Endothelial cell of umbilical vein (primary cell): ENCODE measurements at regions of chr7 and their contacts with region 1.

Region 1: DNA sequence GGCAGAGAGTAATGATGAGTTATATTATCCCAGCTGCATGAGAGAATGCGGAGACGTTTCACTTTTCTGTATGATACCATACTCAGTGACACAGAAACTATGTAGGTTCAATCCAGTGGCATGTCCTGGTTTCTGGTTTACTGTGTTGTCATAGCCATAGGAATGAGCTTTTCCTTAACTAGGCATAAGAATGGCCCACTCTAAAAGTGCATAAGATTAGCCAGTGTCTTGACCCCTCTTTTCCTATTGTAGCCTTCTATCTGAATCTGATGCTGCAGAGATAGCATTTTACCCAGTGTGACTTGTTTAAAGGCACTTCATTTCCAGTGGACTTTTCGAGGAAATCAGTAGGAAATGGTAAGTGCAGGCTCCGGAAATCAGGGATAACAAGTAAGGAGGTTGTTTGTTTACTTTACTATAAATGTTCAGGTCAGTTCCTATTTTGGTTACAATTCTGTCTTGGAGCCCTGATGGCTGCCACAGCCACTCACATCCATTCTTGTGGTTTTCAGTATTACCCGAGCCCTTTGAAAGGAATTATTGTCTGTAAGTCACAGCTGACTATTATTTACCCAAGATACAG is 70.5 kb downstream of the SEMA3A start:
- DNase-seq: peak; percentile 85
- H3K4me3 ChIP-seq: peak overlapping the region in 1 of 3 experiments; percentile 38
- H3K27ac ChIP-seq: peak overlapping the region; percentile 57
- H3K4me1 ChIP-seq: peaks cover 11% of the 10 kb centered on the region
- H3K27me3 ChIP-seq: no peaks in the 10 kb centered on the region
- CTCF ChIP-seq: no peak
- POLR2A ChIP-seq: no peak

Region 2: GRCh38 chr7:84025332-84025927 is 98.6 kb before region 1 on chr7:
- CTCF ChIA-PET with region 1: no interaction called
- POLR2A ChIA-PET with region 1: no interaction called
- dilution Hi-C with region 1: no loop called
- intact Hi-C with region 1: loop called (anchors 1 kb)
- DNase-seq: peak; percentile 95
- H3K4me3 ChIP-seq: no peak overlapping the region
- H3K27ac ChIP-seq: peak overlapping the region; percentile 65
- H3K4me1 ChIP-seq: peaks cover 15% of the 10 kb centered on the region
- H3K27me3 ChIP-seq: no peaks in the 10 kb centered on the region
- CTCF ChIP-seq: no peak
- POLR2A ChIP-seq: no peak

Region 3: DNA sequence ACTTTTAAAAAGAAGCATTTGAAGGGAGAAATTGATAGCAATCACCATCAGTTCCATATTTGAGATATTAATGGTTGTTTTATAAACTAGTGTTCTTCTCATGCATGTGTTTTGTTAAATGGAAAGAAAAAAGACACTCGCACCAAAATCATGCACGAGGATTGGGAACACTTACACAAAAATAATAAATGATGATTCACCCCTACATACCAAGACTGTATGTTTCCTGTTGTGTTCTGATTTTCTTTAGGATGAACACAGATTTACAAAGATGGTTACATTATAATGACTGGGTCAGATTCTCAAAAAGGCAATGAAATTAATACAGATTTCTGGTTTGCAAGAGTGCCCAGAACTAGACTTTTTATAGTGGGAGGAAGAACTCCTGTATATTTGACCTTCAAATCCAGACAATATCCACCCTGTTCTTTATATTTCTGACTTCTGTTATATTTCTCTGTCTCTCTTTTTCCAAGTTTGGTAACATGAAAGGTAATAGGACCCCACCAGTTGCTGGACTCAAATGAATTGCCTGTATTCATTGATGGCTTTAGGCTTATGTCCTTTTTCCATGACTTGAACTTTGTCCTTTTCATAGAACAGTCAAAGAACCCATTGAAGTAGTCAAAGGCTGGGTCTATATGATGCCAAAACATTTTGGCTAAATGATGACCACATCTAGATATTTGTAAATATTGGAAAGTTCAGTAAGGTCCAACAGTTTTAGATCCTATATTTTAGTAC is 16.1 kb after region 1 on chr7:
- CTCF ChIA-PET with region 1: interaction called, 3 read pairs
- POLR2A ChIA-PET with region 1: no interaction called
- dilution Hi-C with region 1: no loop called
- intact Hi-C with region 1: loop called (anchors 2 kb)
- DNase-seq: peak; percentile 55
- H3K4me3 ChIP-seq: no peak overlapping the region
- H3K27ac ChIP-seq: peak overlapping the region; percentile 20
- H3K4me1 ChIP-seq: peaks cover 14% of the 10 kb centered on the region
- H3K27me3 ChIP-seq: no peaks in the 10 kb centered on the region
- CTCF ChIP-seq: no peak
- POLR2A ChIP-seq: no peak

Region 4: GRCh38 chr7:84161398-84161797 is 37.3 kb after region 1 on chr7:
- CTCF ChIA-PET with region 1: no interaction called
- POLR2A ChIA-PET with region 1: no interaction called
- dilution Hi-C with region 1: no loop called
- intact Hi-C with region 1: no loop called
- DNase-seq: no peak
- H3K4me3 ChIP-seq: no peak overlapping the region
- H3K27ac ChIP-seq: no peak overlapping the region
- H3K4me1 ChIP-seq: no peaks in the 10 kb centered on the region
- H3K27me3 ChIP-seq: no peaks in the 10 kb centered on the region
- CTCF ChIP-seq: no peak
- POLR2A ChIP-seq: no peak

Region 5: DNA sequence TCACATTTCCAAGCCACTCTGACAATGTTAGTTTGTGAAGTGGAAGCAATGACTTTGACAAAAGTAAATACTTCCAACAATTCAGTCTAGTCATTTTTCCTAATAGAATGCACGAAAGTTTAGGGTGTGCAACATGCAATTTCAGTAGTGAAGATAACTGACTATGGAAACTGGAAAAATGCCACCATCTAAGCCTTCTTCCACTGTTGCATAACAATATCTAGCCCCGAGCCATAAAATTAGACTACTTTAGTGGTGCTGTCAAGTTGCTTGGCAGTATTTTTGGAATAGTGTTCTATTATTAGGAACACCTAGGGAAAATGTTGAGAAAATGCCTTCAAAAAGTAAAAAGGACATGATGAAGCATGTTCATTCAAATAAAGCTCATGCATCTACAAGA is 52.7 kb after region 1 on chr7:
- CTCF ChIA-PET with region 1: no interaction called
- POLR2A ChIA-PET with region 1: no interaction called
- dilution Hi-C with region 1: no loop called
- intact Hi-C with region 1: no loop called
- DNase-seq: no peak
- H3K4me3 ChIP-seq: no peak overlapping the region
- H3K27ac ChIP-seq: no peak overlapping the region
- H3K4me1 ChIP-seq: no peaks in the 10 kb centered on the region
- H3K27me3 ChIP-seq: no peaks in the 10 kb centered on the region
- CTCF ChIP-seq: no peak
- POLR2A ChIP-seq: no peak

Region 6: DNA sequence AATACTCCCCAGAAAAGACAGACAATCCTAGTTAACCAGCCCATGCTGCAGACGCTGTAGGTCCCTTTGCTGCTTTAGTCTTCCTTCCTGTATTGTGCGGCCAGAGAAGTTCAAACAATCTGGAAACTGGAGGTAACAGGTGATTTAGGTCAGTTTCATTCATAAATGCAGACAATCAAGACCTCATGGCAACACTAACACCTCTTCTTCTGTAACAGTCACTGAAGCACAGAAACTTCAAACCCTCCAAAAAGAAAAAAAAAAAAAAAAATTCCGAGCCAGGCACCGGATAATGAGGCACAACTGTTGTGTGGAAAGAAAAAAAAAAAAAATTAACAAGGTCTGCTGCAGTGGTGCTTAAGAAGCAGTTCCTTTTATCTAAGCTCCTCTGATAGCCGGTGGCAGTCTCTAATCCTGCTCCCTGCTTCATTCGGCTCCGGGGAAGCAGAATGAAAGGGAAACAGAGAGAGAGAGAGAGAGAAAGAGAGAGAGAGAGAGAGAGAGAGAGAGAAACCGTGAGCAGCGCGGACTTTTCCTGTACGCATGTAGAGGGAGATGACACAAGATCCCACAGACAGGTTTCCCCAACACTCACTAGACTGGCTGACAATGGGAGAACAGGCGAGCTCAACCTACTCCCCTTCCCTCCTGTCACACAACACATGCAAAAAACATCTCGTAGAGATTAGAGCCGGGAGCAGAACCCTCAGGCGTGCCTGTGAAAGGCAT is 70.7 kb after region 1 on chr7 and contains the start of gene SEMA3A:
- CTCF ChIA-PET with region 1: no interaction called
- POLR2A ChIA-PET with region 1: no interaction called
- dilution Hi-C with region 1: no loop called
- intact Hi-C with region 1: loop called (anchors 5 kb)
- DNase-seq: peak; percentile 78
- H3K4me3 ChIP-seq: peak within 1 kb of the TSS; percentile 48 to 96 (median 92)
- H3K27ac ChIP-seq: peak within 1 kb of the TSS; percentile 24
- H3K4me1 ChIP-seq: peaks cover 11% of the 10 kb centered on the region
- H3K27me3 ChIP-seq: no peaks in the 10 kb centered on the region
- CTCF ChIP-seq: no peak
- POLR2A ChIP-seq: no peak
- total RNA-seq, gene SEMA3A: 1.2 and 1.7 TPM in 2 replicates